ENCODE measurements at regions of chr16 and their contacts with region 1.

Region 1: DNA sequence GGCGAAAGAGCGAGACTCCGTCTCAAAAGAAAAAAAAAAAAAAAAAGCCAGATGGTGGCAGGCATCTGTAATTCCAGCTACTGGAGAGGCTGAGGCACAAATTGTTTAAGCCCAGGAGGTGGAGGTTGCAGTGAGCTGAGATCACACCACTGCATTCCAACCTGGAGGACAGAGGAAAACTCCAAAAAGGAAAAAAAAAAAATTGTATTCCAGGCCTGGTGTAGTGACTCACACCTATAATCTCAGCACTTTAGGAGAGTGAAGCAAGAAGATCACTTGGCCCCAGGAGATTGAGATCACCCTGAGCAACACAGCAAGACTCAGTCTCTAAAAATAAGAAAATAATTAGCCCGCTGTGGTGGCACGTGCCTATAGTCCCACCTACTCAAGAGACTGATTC is 20.1 kb downstream of the HBQ1 start:
- DNase-seq: no peak
- H3K4me3 ChIP-seq: no peak overlapping the region
- H3K4me3 Mint-ChIP-seq: no peak overlapping the region
- H3K27ac ChIP-seq: no peak overlapping the region
- H3K27ac Mint-ChIP-seq: peak overlapping the region in 1 of 8 donors; percentile 54
- H3K4me1 ChIP-seq: no peaks in the 10 kb centered on the region
- H3K4me1 Mint-ChIP-seq: peaks cover 0 to 3% (median 0%) of the 10 kb centered on the region in 3 donors
- H3K27me3 ChIP-seq: no peaks in the 10 kb centered on the region
- H3K27me3 Mint-ChIP-seq: no peaks in the 10 kb centered on the region

Region 2: GRCh38 chr16:188671-189070 is 11.7 kb before region 1 on chr16:
- CTCF ChIA-PET with region 1: no interaction called
- POLR2A ChIA-PET with region 1: no interaction called
- DNase-seq: peak in 1 of 5 donors; percentile 38
- H3K4me3 ChIP-seq: no peak overlapping the region
- H3K4me3 Mint-ChIP-seq: no peak overlapping the region
- H3K27ac ChIP-seq: no peak overlapping the region
- H3K27ac Mint-ChIP-seq: peak overlapping the region in 1 of 8 donors; percentile 53
- H3K4me1 ChIP-seq: no peaks in the 10 kb centered on the region
- H3K4me1 Mint-ChIP-seq: peaks cover 0 to 4% (median 3%) of the 10 kb centered on the region in 3 donors
- H3K27me3 ChIP-seq: no peaks in the 10 kb centered on the region
- H3K27me3 Mint-ChIP-seq: no peaks in the 10 kb centered on the region

Region 3: DNA sequence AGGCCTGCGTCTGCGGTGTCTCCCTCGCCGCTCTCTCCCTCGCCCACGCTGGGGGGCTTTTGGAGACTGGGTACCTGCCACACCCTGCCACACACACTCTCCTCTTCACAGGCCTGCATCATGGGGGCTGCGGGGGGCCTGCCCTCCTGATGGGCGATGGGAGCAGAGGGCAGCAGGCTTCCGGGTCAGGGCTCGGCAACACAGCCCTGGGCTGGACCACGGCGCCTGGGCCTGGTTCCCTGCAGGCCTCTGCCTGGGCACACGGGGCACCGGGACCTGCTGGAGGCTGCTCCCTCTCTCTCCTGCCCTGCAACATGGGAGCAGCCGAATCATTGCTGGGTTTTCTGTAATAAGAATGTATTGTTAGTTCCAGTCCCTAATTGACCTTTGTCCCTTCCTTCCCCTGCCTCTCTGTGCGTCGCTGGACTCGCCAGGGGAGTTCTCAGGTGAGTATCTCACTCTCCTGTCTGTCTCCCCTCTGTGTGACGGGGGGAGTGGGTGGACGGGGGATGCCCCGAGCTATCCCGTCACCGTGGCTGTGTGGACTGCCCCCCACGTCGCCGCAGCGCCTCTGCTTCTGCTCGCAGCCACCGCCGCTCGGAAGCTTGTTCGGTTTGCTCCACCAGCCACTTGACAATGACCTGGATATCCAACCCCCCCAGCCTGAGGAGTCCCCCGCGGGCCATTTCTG is 1557.5 kb after region 1 on chr16:
- CTCF ChIA-PET with region 1: no interaction called
- POLR2A ChIA-PET with region 1: interaction called, 11 read pairs
- DNase-seq: no peak
- H3K4me3 ChIP-seq: no peak overlapping the region
- H3K4me3 Mint-ChIP-seq: peak overlapping the region in 1 of 7 donors; percentile 54
- H3K27ac ChIP-seq: no peak overlapping the region
- H3K27ac Mint-ChIP-seq: peak overlapping the region in 3 of 8 donors; percentile 39 to 94 (median 87)
- H3K4me1 ChIP-seq: peaks cover 10% of the 10 kb centered on the region
- H3K4me1 Mint-ChIP-seq: peaks cover 8 to 14% (median 10%) of the 10 kb centered on the region in 3 donors
- H3K27me3 ChIP-seq: no peaks in the 10 kb centered on the region
- H3K27me3 Mint-ChIP-seq: no peaks in the 10 kb centered on the region

Measured in CD8-positive, alpha-beta memory T cell (primary cell).